H1 (cell line): ENCODE measurements at regions of chr11 and their contacts with region 1.

Region 1: GRCh38 chr11:44427432-44427831 is 117.5 kb upstream of the ALX4 start:
- DNase-seq: peak in 1 of 2 experiments; percentile 88
- H3K4me3 ChIP-seq: no peak overlapping the region
- H3K27ac ChIP-seq: no peak overlapping the region
- H3K4me1 ChIP-seq: no peaks in the 10 kb centered on the region
- H3K27me3 ChIP-seq: no peaks in the 10 kb centered on the region; a peak in 2 of 7 replicates
- CTCF ChIP-seq: peak; percentile 76 to 92 (median 89)
- EP300 ChIP-seq: no peak
- POLR2A ChIP-seq: no peak
- RAD21 ChIP-seq: peak; percentile 47 to 68

Region 2: GRCh38 chr11:44191322-44192016 is 236.0 kb before region 1 on chr11:
- CTCF ChIA-PET with region 1: no interaction called
- POLR2A ChIA-PET with region 1: no interaction called
- DNase-seq: no peak
- H3K4me3 ChIP-seq: no peak overlapping the region
- H3K27ac ChIP-seq: no peak overlapping the region
- H3K4me1 ChIP-seq: peaks cover 0 to 13% (median 8%) of the 10 kb centered on the region in 4 experiments; a peak in 3 of 7 replicates
- H3K27me3 ChIP-seq: no peaks in the 10 kb centered on the region
- CTCF ChIP-seq: no peak
- EP300 ChIP-seq: no peak
- POLR2A ChIP-seq: no peak
- RAD21 ChIP-seq: no peak

Region 3: DNA sequence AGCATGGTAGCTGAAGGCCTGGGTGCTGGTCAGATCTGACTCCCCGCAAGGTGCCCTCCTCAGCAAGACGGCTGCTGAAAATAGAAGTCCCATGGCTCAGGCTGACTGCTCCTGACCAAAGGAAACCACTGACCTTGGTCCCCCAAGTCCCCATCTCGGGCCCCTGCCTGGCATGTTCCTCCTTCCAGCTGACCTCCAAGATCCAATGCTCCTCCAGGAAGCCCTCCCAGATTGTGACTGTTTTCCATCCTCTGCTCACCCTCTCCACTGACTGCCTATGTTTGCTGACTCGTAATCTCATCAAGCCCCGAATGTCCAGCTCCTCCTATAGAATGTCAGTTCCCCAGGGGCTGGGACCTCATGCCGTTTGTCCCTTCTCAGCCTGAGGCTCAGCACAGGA is 147.9 kb before region 1 on chr11:
- CTCF ChIA-PET with region 1: no interaction called
- POLR2A ChIA-PET with region 1: no interaction called
- DNase-seq: no peak
- H3K4me3 ChIP-seq: no peak overlapping the region
- H3K27ac ChIP-seq: no peak overlapping the region
- H3K4me1 ChIP-seq: no peaks in the 10 kb centered on the region
- H3K27me3 ChIP-seq: no peaks in the 10 kb centered on the region
- CTCF ChIP-seq: no peak
- EP300 ChIP-seq: no peak
- POLR2A ChIP-seq: no peak
- RAD21 ChIP-seq: no peak

Region 4: GRCh38 chr11:44409558-44410236 is 17.7 kb before region 1 on chr11:
- CTCF ChIA-PET with region 1: interaction called, 35 read pairs
- POLR2A ChIA-PET with region 1: no interaction called
- DNase-seq: no peak
- H3K4me3 ChIP-seq: no peak overlapping the region
- H3K27ac ChIP-seq: no peak overlapping the region
- H3K4me1 ChIP-seq: no peaks in the 10 kb centered on the region; a peak in 1 of 7 replicates
- H3K27me3 ChIP-seq: no peaks in the 10 kb centered on the region
- CTCF ChIP-seq: no peak
- EP300 ChIP-seq: no peak
- POLR2A ChIP-seq: no peak
- RAD21 ChIP-seq: no peak

Region 5: DNA sequence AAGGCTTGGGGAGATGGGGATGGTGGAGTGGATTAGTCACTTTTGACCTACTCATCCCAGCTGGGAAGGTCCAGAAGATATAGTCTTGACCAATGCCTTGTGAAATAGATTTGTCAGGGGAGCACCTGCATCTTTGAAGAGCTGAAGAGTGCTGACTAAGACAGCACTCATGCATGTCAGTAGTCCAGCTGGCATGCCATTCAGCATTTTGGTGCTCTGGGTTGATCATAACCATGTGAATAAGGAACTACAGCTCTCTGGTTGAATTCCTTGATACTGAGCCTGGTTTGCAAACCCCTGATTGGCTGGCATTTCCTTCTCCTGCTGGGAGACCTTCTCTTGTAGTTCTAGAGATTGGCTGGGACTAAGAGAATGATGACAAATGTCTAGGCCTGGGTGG is 10.7 kb before region 1 on chr11:
- CTCF ChIA-PET with region 1: interaction called, 35 read pairs
- POLR2A ChIA-PET with region 1: no interaction called
- DNase-seq: no peak
- H3K4me3 ChIP-seq: no peak overlapping the region
- H3K27ac ChIP-seq: no peak overlapping the region
- H3K4me1 ChIP-seq: no peaks in the 10 kb centered on the region
- H3K27me3 ChIP-seq: peaks cover 0 to 2% (median 0%) of the 10 kb centered on the region in 4 experiments; a peak in 1 of 7 replicates
- CTCF ChIP-seq: no peak
- EP300 ChIP-seq: no peak
- POLR2A ChIP-seq: no peak
- RAD21 ChIP-seq: no peak

Region 6: DNA sequence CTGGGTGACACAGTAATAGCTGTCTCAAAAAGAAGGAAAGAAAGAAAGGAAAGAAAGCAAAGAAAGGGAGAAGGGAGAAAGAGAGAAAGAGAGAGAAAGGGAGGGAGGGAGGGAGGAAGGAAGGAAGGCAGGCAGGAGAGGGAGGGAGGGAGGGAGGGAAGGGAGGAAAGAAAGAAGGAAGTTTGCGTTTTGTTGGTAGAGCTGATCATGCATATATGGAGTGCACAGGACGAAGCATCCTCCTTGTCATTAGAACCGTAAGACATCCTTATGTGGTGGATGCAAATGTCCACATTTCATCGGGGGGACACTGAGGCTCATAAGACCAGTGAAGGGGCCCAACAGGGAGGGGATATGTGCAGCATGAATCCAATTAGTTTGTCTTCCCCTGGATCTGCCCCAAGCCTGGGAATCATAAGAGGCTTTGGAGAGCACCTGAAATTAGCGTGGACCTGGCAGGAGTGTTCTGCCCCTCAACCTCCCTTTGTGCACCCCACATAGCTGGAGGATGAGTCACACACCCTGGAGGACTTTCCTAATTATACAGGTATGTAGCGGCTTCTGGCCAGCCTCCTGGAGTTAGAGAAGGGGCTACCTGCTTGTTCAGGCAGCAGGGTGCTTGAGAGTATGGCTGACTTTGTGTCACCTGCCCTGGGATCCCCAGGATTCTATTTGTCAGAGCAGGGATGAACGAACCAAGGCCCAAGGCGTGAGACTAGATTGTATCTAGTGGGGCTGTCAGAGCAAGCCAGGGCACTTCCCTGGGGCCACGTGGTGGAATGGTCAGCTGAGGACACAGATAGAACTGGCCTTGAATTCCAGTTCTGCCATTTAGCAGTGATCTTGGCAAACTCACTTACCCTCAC is 18.3 kb after region 1 on chr11:
- CTCF ChIA-PET with region 1: interaction called, 18 read pairs
- POLR2A ChIA-PET with region 1: interaction called, 4 read pairs
- DNase-seq: peak in 1 of 2 experiments; percentile 59
- H3K4me3 ChIP-seq: no peak overlapping the region
- H3K27ac ChIP-seq: no peak overlapping the region
- H3K4me1 ChIP-seq: peaks cover 3 to 14% (median 7%) of the 10 kb centered on the region in 4 experiments; a peak in 5 of 7 replicates
- H3K27me3 ChIP-seq: peaks cover 0 to 2% (median 0%) of the 10 kb centered on the region in 4 experiments; a peak in 2 of 7 replicates
- CTCF ChIP-seq: no peak
- EP300 ChIP-seq: no peak
- POLR2A ChIP-seq: no peak
- RAD21 ChIP-seq: no peak

Region 7: GRCh38 chr11:44456544-44457300 is 29.3 kb after region 1 on chr11:
- CTCF ChIA-PET with region 1: interaction called, 15 read pairs
- POLR2A ChIA-PET with region 1: no interaction called
- DNase-seq: peak in 1 of 2 experiments; percentile 58
- H3K4me3 ChIP-seq: no peak overlapping the region
- H3K27ac ChIP-seq: no peak overlapping the region
- H3K4me1 ChIP-seq: peaks cover 0 to 2% (median 0%) of the 10 kb centered on the region in 4 experiments; a peak in 1 of 7 replicates
- H3K27me3 ChIP-seq: no peaks in the 10 kb centered on the region
- CTCF ChIP-seq: peak; percentile 45 to 75 (median 71); a peak in 3 of 4 replicates
- EP300 ChIP-seq: no peak
- POLR2A ChIP-seq: no peak
- RAD21 ChIP-seq: peak; percentile 18 to 49; a peak in 2 of 4 replicates

Region 8: GRCh38 chr11:44531116-44531504 is 103.7 kb after region 1 on chr11:
- CTCF ChIA-PET with region 1: interaction called, 16 read pairs
- POLR2A ChIA-PET with region 1: no interaction called
- DNase-seq: no peak
- H3K4me3 ChIP-seq: no peak overlapping the region
- H3K27ac ChIP-seq: no peak overlapping the region
- H3K4me1 ChIP-seq: peaks cover 0 to 2% (median 0%) of the 10 kb centered on the region in 4 experiments; a peak in 5 of 7 replicates
- H3K27me3 ChIP-seq: no peaks in the 10 kb centered on the region
- CTCF ChIP-seq: no peak
- EP300 ChIP-seq: no peak
- POLR2A ChIP-seq: no peak
- RAD21 ChIP-seq: no peak